Prostate gland (tissue), 2 donors: ENCODE measurements at regions of chr12 and their contacts with region 1.

Region 1: GRCh38 chr12:10153271-10154144 is 18.4 kb downstream of the OLR1 start:
- DNase-seq: peak; percentile 53
- H3K4me3 ChIP-seq: peak overlapping the region; percentile 25 to 33
- H3K27ac ChIP-seq: peak overlapping the region; percentile 64 to 73
- H3K4me1 ChIP-seq: no peaks in the 10 kb centered on the region
- H3K27me3 ChIP-seq: no peaks in the 10 kb centered on the region
- CTCF ChIP-seq: peak; percentile 77 to 84 (median 78)
- POLR2A ChIP-seq: no peak

Region 2: GRCh38 chr12:10190558-10191388 is 37.3 kb after region 1 on chr12:
- intact Hi-C with region 1: loop called (anchors 2 kb)
- DNase-seq: peak; percentile 44
- H3K4me3 ChIP-seq: no peak overlapping the region
- H3K27ac ChIP-seq: no peak overlapping the region
- H3K4me1 ChIP-seq: no peaks in the 10 kb centered on the region
- H3K27me3 ChIP-seq: no peaks in the 10 kb centered on the region
- CTCF ChIP-seq: peak; percentile 10 to 75 (median 58)
- POLR2A ChIP-seq: no peak